T-cell (primary cell): ENCODE measurements at regions of chrX and their contacts with region 1.

Region 1: DNA sequence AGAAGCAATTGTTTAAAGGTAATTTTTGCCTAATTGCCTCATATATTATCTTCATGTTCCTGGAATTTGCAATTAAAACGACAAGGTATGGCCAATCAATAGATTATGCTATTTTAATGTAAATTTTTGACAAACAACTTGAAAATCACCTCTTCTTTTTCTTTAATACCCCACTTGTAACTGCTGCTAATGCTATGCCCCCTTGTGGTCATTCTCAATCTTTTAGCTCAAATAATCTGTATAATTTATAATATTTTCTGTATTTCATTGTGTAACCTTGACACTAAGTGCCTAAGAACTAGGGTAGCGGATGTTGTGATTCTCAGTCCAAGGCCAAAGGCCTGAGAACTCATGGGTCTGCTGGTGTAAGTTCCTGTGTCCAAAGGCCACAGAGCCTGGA is 831.7 kb upstream of the POU3F4 start:
- DNase-seq: peak in 1 of 35 experiments; percentile 4
- ATAC-seq: no peak
- H3K4me3 ChIP-seq: no peak overlapping the region
- H3K4me3 Mint-ChIP-seq: no peak overlapping the region
- H3K27ac ChIP-seq: no peak overlapping the region
- H3K27ac Mint-ChIP-seq: no peak overlapping the region
- H3K4me1 ChIP-seq: no peaks in the 10 kb centered on the region
- H3K4me1 Mint-ChIP-seq: no peaks in the 10 kb centered on the region
- H3K27me3 ChIP-seq: no peaks in the 10 kb centered on the region
- H3K27me3 Mint-ChIP-seq: no peaks in the 10 kb centered on the region

Region 2: DNA sequence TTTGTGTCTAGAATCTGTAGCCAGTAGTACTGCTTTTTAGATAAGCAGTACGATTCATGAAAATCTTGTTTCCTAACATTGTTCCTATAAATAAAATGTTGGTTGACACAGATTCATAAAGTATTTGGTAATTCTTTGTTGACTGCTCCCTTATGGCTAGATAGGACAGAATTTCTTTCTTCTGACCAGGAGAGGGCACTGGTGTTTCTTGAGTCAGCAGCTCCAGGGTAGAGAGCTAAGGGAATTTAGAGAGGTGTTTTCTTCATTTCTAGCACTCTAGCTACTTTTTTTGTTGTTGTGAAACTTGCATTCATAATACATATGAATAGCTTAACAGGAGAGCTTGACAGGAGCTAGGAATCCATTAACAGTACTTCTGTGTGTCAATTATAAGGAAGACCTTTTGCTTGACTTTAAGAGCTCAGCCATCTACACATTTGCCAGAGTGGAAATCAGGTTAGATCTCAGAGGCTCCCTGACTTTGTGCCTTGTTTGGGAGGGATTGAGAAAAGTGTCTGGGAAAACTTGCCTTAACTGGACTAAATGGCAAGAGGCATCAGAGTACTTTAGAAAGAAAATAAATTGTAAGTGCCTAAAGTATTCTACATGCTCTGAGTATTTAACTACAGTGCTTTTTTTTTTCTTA is 718.4 kb before region 1 on chrX:
- CTCF ChIA-PET with region 1: interaction called in 1 of 2 experiments, 17 read pairs
- POLR2A ChIA-PET with region 1: no interaction called
- DNase-seq: peak in 1 of 35 experiments; percentile 48
- ATAC-seq: no peak
- H3K4me3 ChIP-seq: no peak overlapping the region
- H3K4me3 Mint-ChIP-seq: no peak overlapping the region
- H3K27ac ChIP-seq: no peak overlapping the region
- H3K27ac Mint-ChIP-seq: no peak overlapping the region
- H3K4me1 ChIP-seq: no peaks in the 10 kb centered on the region
- H3K4me1 Mint-ChIP-seq: peaks cover 0 to 2% (median 0%) of the 10 kb centered on the region in 3 donors
- H3K27me3 ChIP-seq: no peaks in the 10 kb centered on the region
- H3K27me3 Mint-ChIP-seq: peaks cover 0 to 6% of the 10 kb centered on the region in 2 donors

Region 3: DNA sequence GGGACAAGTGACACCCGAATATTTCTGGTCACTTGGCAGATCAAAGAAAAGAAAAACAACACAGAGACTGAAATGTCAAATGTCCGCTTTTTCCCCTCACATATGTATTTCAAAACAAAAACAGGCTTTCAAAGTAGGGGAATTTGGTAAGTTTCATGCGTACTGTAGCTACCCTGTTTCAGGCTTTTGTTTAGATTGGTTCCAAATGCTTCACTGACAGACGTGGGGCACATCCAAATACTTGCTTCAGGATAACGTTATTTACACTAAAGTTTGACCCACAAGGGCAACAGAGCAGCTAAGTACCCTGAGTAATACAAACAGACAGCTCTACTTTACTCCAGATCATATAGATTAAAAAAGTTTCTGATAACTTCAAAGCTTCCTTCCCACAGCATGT is 27.2 kb after region 1 on chrX:
- CTCF ChIA-PET with region 1: no interaction called
- POLR2A ChIA-PET with region 1: no interaction called
- DNase-seq: no peak
- ATAC-seq: no peak
- H3K4me3 ChIP-seq: no peak overlapping the region
- H3K4me3 Mint-ChIP-seq: no peak overlapping the region
- H3K27ac ChIP-seq: no peak overlapping the region
- H3K27ac Mint-ChIP-seq: no peak overlapping the region
- H3K4me1 ChIP-seq: no peaks in the 10 kb centered on the region
- H3K4me1 Mint-ChIP-seq: no peaks in the 10 kb centered on the region
- H3K27me3 ChIP-seq: no peaks in the 10 kb centered on the region
- H3K27me3 Mint-ChIP-seq: peaks cover 0 to 7% of the 10 kb centered on the region in 2 donors